ENCODE measurements at regions of chr13 and their contacts with region 1.

Region 1: GRCh38 chr13:51583875-51584730 is at the start of gene WDFY2:
- DNase-seq: peak; percentile 99 to 100
- H3K4me3 ChIP-seq: peak within 1 kb of the TSS; percentile 79 to 90
- H3K27ac ChIP-seq: peak within 1 kb of the TSS; percentile 84 to 89
- H3K4me1 ChIP-seq: peaks cover 0 to 8% of the 10 kb centered on the region in 2 donors
- H3K27me3 ChIP-seq: no peaks in the 10 kb centered on the region
- CTCF ChIP-seq: peak in 1 of 3 experiments; percentile 6
- total RNA-seq, gene WDFY2: 6.1 TPM

Region 2: GRCh38 chr13:49936085-49936940 is 1647.8 kb before region 1 on chr13 and contains the start of gene SPRYD7:
- intact Hi-C with region 1: loop called (anchors 5 kb)
- DNase-seq: peak; percentile 92 to 99
- H3K4me3 ChIP-seq: peak within 1 kb of the TSS; percentile 78 to 97
- H3K27ac ChIP-seq: peak within 1 kb of the TSS; percentile 78 to 93
- H3K4me1 ChIP-seq: peaks cover 0 to 17% of the 10 kb centered on the region in 2 donors
- H3K27me3 ChIP-seq: no peaks in the 10 kb centered on the region
- CTCF ChIP-seq: peak; percentile 89 to 97 (median 94)
- total RNA-seq, gene SPRYD7: 1.7 TPM

Region 3: GRCh38 chr13:51467730-51468129 is 116.4 kb before region 1 on chr13:
- intact Hi-C with region 1: no loop called
- DNase-seq: no peak
- H3K4me3 ChIP-seq: no peak overlapping the region
- H3K27ac ChIP-seq: no peak overlapping the region
- H3K4me1 ChIP-seq: no peaks in the 10 kb centered on the region
- H3K27me3 ChIP-seq: no peaks in the 10 kb centered on the region
- CTCF ChIP-seq: no peak

Region 4: GRCh38 chr13:51697181-51697580 is 113.1 kb after region 1 on chr13:
- intact Hi-C with region 1: loop called (anchors 10 kb)
- DNase-seq: peak in 1 of 2 donors; percentile 66
- H3K4me3 ChIP-seq: no peak overlapping the region
- H3K27ac ChIP-seq: peak overlapping the region; percentile 65 to 79
- H3K4me1 ChIP-seq: peaks cover 2 to 11% of the 10 kb centered on the region in 2 donors
- H3K27me3 ChIP-seq: no peaks in the 10 kb centered on the region
- CTCF ChIP-seq: no peak

Region 5: GRCh38 chr13:51729866-51730546 is 145.9 kb after region 1 on chr13:
- intact Hi-C with region 1: loop called (anchors 1 kb)
- DNase-seq: peak; percentile 29 to 90
- H3K4me3 ChIP-seq: peak overlapping the region in 1 of 2 donors; percentile 51
- H3K27ac ChIP-seq: peak overlapping the region; percentile 84 to 93
- H3K4me1 ChIP-seq: peaks cover 15 to 47% of the 10 kb centered on the region in 2 donors
- H3K27me3 ChIP-seq: no peaks in the 10 kb centered on the region
- CTCF ChIP-seq: no peak

Region 6: DNA sequence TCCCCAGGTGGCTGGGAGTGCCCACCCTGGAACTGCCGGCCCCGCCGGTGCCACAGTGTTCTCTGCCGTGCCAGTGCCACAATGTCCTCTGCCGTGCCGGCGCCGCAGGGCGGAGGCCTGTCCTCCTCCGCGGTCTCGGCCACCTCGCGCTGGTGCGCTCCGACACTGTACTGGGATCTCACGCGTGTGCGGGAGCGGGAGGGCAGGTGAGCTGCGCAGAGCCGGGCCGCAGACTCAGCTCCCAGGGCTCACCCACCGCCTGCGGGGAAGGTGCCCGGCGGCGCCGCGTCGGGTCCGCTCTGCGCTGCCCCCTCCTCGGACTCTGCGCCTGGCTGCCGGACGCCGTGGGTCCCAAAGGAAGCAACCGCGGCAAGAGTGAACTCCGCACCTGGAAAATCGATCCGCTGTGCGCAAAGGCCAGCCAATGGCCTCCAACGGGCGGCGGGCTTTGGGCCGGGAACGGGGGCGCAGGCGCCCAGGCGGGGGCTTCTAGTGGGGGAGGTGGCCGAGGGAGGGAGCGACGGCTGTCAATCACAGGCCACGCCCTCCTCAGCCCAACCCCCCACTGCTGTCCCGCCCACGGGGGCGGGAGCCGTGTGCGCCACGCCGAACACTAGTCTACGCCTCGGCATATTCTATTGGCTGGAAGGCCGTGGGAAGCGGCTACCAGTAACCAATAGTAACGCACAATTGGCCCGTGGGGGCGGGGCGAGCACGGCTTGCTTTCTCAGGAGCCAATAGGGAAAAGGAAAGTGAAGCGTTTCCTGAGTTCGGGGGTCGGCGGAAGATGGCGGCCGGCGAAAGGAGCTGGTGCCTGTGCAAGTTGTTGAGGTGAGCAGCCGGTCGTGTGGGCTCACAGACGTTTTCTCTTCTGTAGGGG is 427.8 kb after region 1 on chr13 and contains the start of gene ALG11:
- intact Hi-C with region 1: loop called (anchors 1 kb)
- DNase-seq: peak; percentile 97 to 100
- H3K4me3 ChIP-seq: peak within 1 kb of the TSS; percentile 73 to 75
- H3K27ac ChIP-seq: peak within 1 kb of the TSS; percentile 65 to 70
- H3K4me1 ChIP-seq: peaks cover 0 to 9% of the 10 kb centered on the region in 2 donors
- H3K27me3 ChIP-seq: no peaks in the 10 kb centered on the region
- CTCF ChIP-seq: no peak
- total RNA-seq, gene ALG11: 13.6 TPM